ENCODE measurements at regions of chr20 and their contacts with region 1.

Region 1: GRCh38 chr20:50395258-50395729 is 114.9 kb upstream of the PTPN1 start:
- DNase-seq: peak; percentile 90 to 97
- ATAC-seq: peak; percentile 53 to 79 (median 74)
- H3K4me3 ChIP-seq: no peak overlapping the region
- H3K27ac ChIP-seq: peak overlapping the region; percentile 97
- H3K4me1 ChIP-seq: peaks cover 56% of the 10 kb centered on the region
- H3K27me3 ChIP-seq: no peaks in the 10 kb centered on the region
- CTCF ChIP-seq: no peak

Region 2: GRCh38 chr20:50292324-50293243 is 102.7 kb before region 1 on chr20:
- intact Hi-C with region 1: loop called in 1 of 2 experiments (anchors 5 kb)
- DNase-seq: peak; percentile 97
- ATAC-seq: peak; percentile 84 to 88 (median 86)
- H3K4me3 ChIP-seq: no peak overlapping the region
- H3K27ac ChIP-seq: peak overlapping the region; percentile 89
- H3K4me1 ChIP-seq: peaks cover 16% of the 10 kb centered on the region
- H3K27me3 ChIP-seq: no peaks in the 10 kb centered on the region
- CTCF ChIP-seq: no peak

Region 3: GRCh38 chr20:50415516-50416113 is 20.3 kb after region 1 on chr20:
- intact Hi-C with region 1: loop called in 1 of 2 experiments (anchors 2 kb)
- DNase-seq: peak; percentile 100
- ATAC-seq: peak; percentile 85 to 93 (median 90)
- H3K4me3 ChIP-seq: peak overlapping the region; percentile 28
- H3K27ac ChIP-seq: peak overlapping the region; percentile 98
- H3K4me1 ChIP-seq: peaks cover 47% of the 10 kb centered on the region
- H3K27me3 ChIP-seq: no peaks in the 10 kb centered on the region
- CTCF ChIP-seq: no peak

Region 4: GRCh38 chr20:50450881-50451752 is 55.8 kb after region 1 on chr20:
- intact Hi-C with region 1: no loop called
- DNase-seq: peak; percentile 41 to 64
- ATAC-seq: peak; percentile 56 to 86 (median 78)
- H3K4me3 ChIP-seq: peak overlapping the region; percentile 45
- H3K27ac ChIP-seq: peak overlapping the region; percentile 65
- H3K4me1 ChIP-seq: peaks cover 13% of the 10 kb centered on the region
- H3K27me3 ChIP-seq: no peaks in the 10 kb centered on the region
- CTCF ChIP-seq: no peak